Activated CD4-positive, alpha-beta memory T cell treated with anti-CD3 and anti-CD28 coated beads, Interleukin-2, amount 10 ng/mL, durations not matched to agents 7 days and 5 days (primary cell): ENCODE measurements at regions of chr4 and their contacts with region 1.

Region 1: GRCh38 chr4:119300101-119300978 is 21.6 kb downstream of the FABP2 start:
- DNase-seq: peak; percentile 94
- H3K4me3 Mint-ChIP-seq: peak overlapping the region; percentile 94
- H3K27ac Mint-ChIP-seq: peak overlapping the region; percentile 94
- H3K4me1 Mint-ChIP-seq: peaks cover 32% of the 10 kb centered on the region
- H3K27me3 Mint-ChIP-seq: peaks cover 2% of the 10 kb centered on the region

Region 2: GRCh38 chr4:119041951-119042560 is 258.3 kb before region 1 on chr4:
- CTCF ChIA-PET with region 1: interaction called, 26 read pairs
- POLR2A ChIA-PET with region 1: interaction called, 3 read pairs
- DNase-seq: peak; percentile 58
- H3K4me3 Mint-ChIP-seq: no peak overlapping the region
- H3K27ac Mint-ChIP-seq: no peak overlapping the region
- H3K4me1 Mint-ChIP-seq: peaks cover 7% of the 10 kb centered on the region
- H3K27me3 Mint-ChIP-seq: peaks cover 3% of the 10 kb centered on the region

Region 3: DNA sequence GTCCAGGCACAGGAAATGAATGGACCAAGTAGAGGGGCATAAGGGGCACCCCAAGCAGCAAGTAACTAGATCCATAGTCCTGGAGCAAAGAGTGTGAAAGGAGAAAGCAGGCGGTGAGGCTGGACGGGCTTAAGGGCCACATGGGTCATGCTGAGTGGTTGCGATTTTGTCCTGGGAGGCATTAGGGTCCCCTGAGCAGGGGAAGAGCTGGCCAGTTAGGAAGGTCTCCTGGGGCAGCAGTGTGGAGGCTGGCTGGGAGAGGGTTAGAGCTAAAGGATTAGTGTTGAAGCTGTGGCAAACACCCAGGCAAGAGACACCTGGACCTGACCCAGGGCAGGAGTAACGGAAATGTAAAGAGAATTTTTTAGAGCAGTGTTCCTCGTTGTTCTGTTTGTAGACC is 138.2 kb before region 1 on chr4:
- CTCF ChIA-PET with region 1: no interaction called
- POLR2A ChIA-PET with region 1: no interaction called
- DNase-seq: no peak
- H3K4me3 Mint-ChIP-seq: no peak overlapping the region
- H3K27ac Mint-ChIP-seq: no peak overlapping the region
- H3K4me1 Mint-ChIP-seq: no peaks in the 10 kb centered on the region
- H3K27me3 Mint-ChIP-seq: peaks cover 6% of the 10 kb centered on the region

Region 4: GRCh38 chr4:119212234-119212963 is 87.9 kb before region 1 on chr4 and contains the start of gene USP53:
- CTCF ChIA-PET with region 1: interaction called, 11 read pairs
- POLR2A ChIA-PET with region 1: interaction called, 43 read pairs
- DNase-seq: peak; percentile 96
- H3K4me3 Mint-ChIP-seq: peak within 1 kb of the TSS; percentile 88
- H3K27ac Mint-ChIP-seq: peak within 1 kb of the TSS; percentile 89
- H3K4me1 Mint-ChIP-seq: peaks cover 32% of the 10 kb centered on the region
- H3K27me3 Mint-ChIP-seq: peaks cover 7% of the 10 kb centered on the region
- total RNA-seq, gene USP53: 6.5 to 7.1 TPM

Region 5: DNA sequence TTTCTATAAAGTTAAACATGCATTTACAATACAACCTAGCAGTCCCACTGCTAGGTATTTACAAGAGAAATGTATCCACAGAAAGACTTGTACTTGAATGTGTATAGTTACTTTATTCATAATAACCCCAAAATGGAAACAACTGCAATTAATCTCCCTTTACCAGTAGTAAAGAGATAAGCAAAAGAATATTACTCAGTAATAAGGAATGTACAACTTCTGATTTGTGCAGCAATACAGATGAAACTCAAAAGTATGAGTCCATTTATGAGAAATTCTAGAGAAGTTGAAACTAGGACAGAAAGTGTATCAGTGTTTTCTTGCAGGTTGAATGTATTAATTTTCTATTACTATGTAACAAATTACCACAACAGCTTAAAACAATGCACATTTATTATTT is 72.7 kb before region 1 on chr4:
- CTCF ChIA-PET with region 1: no interaction called
- POLR2A ChIA-PET with region 1: no interaction called
- DNase-seq: no peak
- H3K4me3 Mint-ChIP-seq: no peak overlapping the region
- H3K27ac Mint-ChIP-seq: no peak overlapping the region
- H3K4me1 Mint-ChIP-seq: no peaks in the 10 kb centered on the region
- H3K27me3 Mint-ChIP-seq: no peaks in the 10 kb centered on the region

Region 6: DNA sequence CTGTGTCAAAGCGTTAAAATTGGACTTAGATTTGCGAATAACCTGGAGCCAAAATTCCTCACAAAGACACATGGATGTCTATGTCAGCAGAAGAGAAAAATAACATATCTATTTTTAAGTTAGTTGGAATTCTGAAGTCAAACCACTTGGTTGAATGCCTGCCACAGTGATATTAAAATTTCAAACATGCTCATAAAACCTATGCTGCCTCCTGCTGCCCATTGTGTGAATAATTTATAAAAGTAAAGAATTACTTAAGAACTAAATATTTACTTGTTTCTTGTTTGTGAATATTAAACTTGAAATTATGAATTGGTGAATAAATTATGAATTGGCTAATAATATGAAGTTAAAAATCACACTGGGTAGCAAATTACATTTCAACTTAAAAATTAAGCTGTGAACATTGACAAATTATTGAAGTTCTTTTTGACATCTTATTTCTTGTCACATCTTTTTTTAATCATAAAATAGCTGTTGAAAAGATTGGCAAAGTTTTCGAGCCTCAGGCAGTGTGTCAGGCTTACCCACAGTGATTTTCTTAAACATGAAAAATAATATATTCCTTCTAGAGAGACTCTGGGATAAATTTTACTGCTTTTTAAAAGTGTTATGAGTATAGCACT is 13.8 kb before region 1 on chr4:
- CTCF ChIA-PET with region 1: interaction called, 3 read pairs
- POLR2A ChIA-PET with region 1: interaction called, 12 read pairs
- DNase-seq: peak; percentile 24
- H3K4me3 Mint-ChIP-seq: no peak overlapping the region
- H3K27ac Mint-ChIP-seq: no peak overlapping the region
- H3K4me1 Mint-ChIP-seq: peaks cover 13% of the 10 kb centered on the region
- H3K27me3 Mint-ChIP-seq: no peaks in the 10 kb centered on the region

Region 7: GRCh38 chr4:119337010-119337409 is 36.7 kb after region 1 on chr4:
- CTCF ChIA-PET with region 1: no interaction called
- POLR2A ChIA-PET with region 1: no interaction called
- DNase-seq: no peak
- H3K4me3 Mint-ChIP-seq: no peak overlapping the region
- H3K27ac Mint-ChIP-seq: no peak overlapping the region
- H3K4me1 Mint-ChIP-seq: peaks cover 2% of the 10 kb centered on the region
- H3K27me3 Mint-ChIP-seq: peaks cover 1% of the 10 kb centered on the region

Region 8: DNA sequence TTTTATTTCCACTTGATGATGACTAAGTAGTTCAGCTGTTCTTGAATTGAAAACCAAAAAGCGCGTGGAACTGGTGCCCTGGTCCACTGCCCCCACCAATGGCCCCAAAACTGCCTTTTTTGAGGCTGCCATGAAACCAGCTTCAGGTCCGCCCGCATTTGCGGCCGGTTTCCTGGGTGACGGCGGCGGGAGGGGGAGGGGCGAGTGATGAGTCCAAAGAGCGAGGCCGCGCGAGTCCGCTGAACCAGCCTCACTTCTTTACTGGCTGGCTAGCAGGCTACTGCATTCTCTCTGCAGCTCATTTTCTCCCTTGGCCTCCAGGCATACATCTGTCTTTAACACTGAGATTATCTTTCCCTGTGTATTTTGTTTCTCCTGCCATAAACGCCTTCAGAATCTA is 94.5 kb after region 1 on chr4:
- CTCF ChIA-PET with region 1: no interaction called
- POLR2A ChIA-PET with region 1: no interaction called
- DNase-seq: no peak
- H3K4me3 Mint-ChIP-seq: no peak overlapping the region
- H3K27ac Mint-ChIP-seq: no peak overlapping the region
- H3K4me1 Mint-ChIP-seq: no peaks in the 10 kb centered on the region
- H3K27me3 Mint-ChIP-seq: peaks cover 1% of the 10 kb centered on the region

Region 9: DNA sequence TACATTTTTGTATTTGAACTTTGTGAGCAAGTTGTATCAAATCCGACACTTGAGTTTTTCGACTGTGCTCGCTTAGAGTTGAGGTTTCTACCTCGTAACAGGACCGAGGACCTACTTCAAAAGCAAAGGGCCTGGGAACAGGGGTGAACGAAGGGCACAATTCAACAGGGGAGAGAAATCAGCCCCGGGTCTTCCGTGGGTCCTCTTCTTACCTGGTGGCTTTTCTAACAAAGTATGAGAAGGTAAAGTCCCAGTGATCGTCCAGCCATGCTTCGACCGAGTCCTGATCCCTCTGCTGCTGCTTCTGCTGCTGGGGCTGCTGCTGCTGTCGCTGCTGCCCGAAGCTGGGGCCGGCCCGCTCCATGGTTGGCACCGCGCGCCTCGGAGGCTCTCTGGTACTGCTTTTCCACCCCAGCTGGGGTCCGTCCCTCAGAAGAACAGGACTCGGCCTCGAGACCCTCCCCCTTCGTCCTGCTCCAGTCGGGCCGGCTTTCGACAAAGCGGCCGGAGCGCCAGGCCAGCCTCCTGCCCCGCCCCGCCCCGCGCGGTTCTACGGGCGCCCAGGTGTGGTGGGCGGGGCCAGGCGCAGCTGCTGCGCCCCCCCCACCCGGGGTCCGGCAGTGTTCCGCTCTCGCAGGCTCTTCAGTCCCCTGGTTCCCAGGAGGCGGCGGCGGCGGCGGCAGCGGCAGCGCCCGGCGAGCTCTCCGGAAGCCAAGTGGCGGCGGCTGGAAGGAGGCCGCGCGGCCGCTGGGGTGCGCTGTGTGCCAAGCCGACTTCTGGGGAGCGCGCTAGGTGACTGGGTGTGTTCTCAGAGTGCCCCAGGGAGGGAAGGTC is 328.2 kb after region 1 on chr4 and contains the start of gene PDE5A:
- CTCF ChIA-PET with region 1: interaction called, 10 read pairs
- POLR2A ChIA-PET with region 1: interaction called, 3 read pairs
- DNase-seq: peak; percentile 79
- H3K4me3 Mint-ChIP-seq: peak within 1 kb of the TSS; percentile 79
- H3K27ac Mint-ChIP-seq: no peak within 1 kb of the TSS
- H3K4me1 Mint-ChIP-seq: peaks cover 24% of the 10 kb centered on the region
- H3K27me3 Mint-ChIP-seq: peaks cover 31% of the 10 kb centered on the region
- total RNA-seq, gene PDE5A: 0.81 to 1.1 TPM